Uterus (tissue), 4 donors: ENCODE measurements at regions of chr22 and their contacts with region 1.

Region 1: GRCh38 chr22:29994027-29994715 is 86.1 kb upstream of the HORMAD2 start:
- DNase-seq: no peak
- H3K4me3 ChIP-seq: no peak overlapping the region
- H3K27ac ChIP-seq: no peak overlapping the region
- H3K4me1 ChIP-seq: no peaks in the 10 kb centered on the region
- H3K27me3 ChIP-seq: no peaks in the 10 kb centered on the region
- CTCF ChIP-seq: no peak
- POLR2A ChIP-seq: no peak

Region 2: DNA sequence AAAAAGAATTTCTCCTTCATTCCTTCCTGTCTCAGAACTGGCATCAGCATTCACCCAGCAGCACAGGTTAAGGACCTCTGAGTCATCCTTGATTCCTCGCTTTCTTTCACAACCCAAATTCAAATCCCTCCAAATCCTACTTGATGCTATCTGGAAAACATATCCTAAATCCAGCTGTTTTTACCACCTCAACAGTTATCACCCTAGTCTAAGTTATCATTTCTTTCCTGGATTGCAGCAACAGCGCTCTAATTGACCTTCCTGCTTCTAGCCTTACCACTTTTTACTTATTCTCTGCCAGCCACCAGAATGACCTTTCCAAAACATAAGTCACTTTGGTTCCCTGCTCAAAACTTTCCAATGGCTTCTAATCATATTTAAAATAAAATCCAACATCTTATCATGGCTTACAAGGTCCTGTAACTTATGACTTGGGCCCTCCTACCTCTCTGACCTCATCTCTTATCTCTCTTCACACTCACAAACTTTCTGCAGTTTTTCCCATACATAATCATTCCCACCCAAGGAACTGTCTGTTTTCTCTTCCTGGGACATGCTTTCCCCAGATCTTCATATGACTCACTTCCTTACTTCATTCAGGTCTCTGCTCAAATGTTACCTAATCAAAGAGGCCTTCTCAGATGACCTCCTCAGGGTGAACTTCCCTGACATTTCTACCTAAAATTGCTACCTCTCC is 1434.0 kb before region 1 on chr22:
- intact Hi-C with region 1: loop called (anchors 10 kb)
- DNase-seq: no peak
- H3K4me3 ChIP-seq: no peak overlapping the region
- H3K27ac ChIP-seq: peak overlapping the region in 1 of 2 donors; percentile 54
- H3K4me1 ChIP-seq: no peaks in the 10 kb centered on the region
- H3K27me3 ChIP-seq: no peaks in the 10 kb centered on the region
- CTCF ChIP-seq: no peak
- POLR2A ChIP-seq: no peak

Region 3: GRCh38 chr22:29813563-29813962 is 180.6 kb before region 1 on chr22:
- intact Hi-C with region 1: no loop called
- DNase-seq: no peak
- H3K4me3 ChIP-seq: no peak overlapping the region
- H3K27ac ChIP-seq: no peak overlapping the region
- H3K4me1 ChIP-seq: no peaks in the 10 kb centered on the region
- H3K27me3 ChIP-seq: no peaks in the 10 kb centered on the region
- CTCF ChIP-seq: no peak
- POLR2A ChIP-seq: no peak